Calu3 (cell line): ENCODE measurements at regions of chr1 and their contacts with region 1.

Region 1: GRCh38 chr1:98546319-98546718 is 115.2 kb upstream of the SNX7 start:
- DNase-seq: no peak
- H3K4me3 Mint-ChIP-seq: no peak overlapping the region
- H3K27ac Mint-ChIP-seq: no peak overlapping the region
- H3K4me1 Mint-ChIP-seq: no peaks in the 10 kb centered on the region
- H3K27me3 Mint-ChIP-seq: no peaks in the 10 kb centered on the region
- CTCF ChIP-seq: no peak

Region 2: DNA sequence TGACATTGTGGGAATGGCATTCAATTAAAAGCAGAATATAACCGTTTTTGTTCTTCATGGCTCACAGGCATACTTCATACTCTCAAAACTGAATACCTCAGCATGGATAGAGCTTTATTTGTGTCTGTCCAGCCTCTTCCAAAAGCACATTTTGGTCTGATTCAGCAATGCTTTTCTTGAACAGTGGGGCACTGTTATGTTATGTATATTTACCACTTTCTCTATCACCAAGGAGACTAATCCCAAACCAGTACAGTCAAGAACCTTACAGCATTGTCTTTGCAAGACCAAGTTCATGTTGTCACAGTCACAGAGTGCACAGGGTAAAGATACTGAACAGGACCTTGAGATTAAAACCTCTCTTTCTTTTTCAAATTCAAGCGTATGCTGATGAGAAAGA is 1242.0 kb before region 1 on chr1:
- CTCF ChIA-PET with region 1: no interaction called
- intact Hi-C with region 1: loop called (anchors 5 kb)
- DNase-seq: no peak
- H3K4me3 Mint-ChIP-seq: no peak overlapping the region
- H3K27ac Mint-ChIP-seq: no peak overlapping the region
- H3K4me1 Mint-ChIP-seq: no peaks in the 10 kb centered on the region
- H3K27me3 Mint-ChIP-seq: no peaks in the 10 kb centered on the region
- CTCF ChIP-seq: no peak